MCF 10A (cell line): ENCODE measurements at regions of chr4 and their contacts with region 1.

Region 1: GRCh38 chr4:168514249-168514852 is 17.5 kb downstream of the PALLD start:
- DNase-seq: peak; percentile 69
- H3K4me3 Mint-ChIP-seq: no peak overlapping the region
- H3K27ac Mint-ChIP-seq: no peak overlapping the region
- H3K4me1 Mint-ChIP-seq: peaks cover 10% of the 10 kb centered on the region
- H3K27me3 Mint-ChIP-seq: no peaks in the 10 kb centered on the region
- CTCF ChIP-seq: peak; percentile 33

Region 2: GRCh38 chr4:168318266-168318895 is 196.0 kb before region 1 on chr4 and contains the start of gene DDX60:
- CTCF ChIA-PET with region 1: interaction called, 3 read pairs
- POLR2A ChIA-PET with region 1: interaction called, 3 read pairs
- intact Hi-C with region 1: loop called (anchors 5 kb)
- DNase-seq: peak; percentile 87
- H3K4me3 Mint-ChIP-seq: peak within 1 kb of the TSS; percentile 95
- H3K27ac Mint-ChIP-seq: peak within 1 kb of the TSS; percentile 97
- H3K4me1 Mint-ChIP-seq: peaks cover 24% of the 10 kb centered on the region
- H3K27me3 Mint-ChIP-seq: no peaks in the 10 kb centered on the region
- CTCF ChIP-seq: peak; percentile 30
- total RNA-seq, gene DDX60: 4.7 and 7.9 TPM in 2 replicates

Region 3: GRCh38 chr4:168503652-168504362 is 10.5 kb before region 1 on chr4:
- CTCF ChIA-PET with region 1: interaction called, 37 read pairs
- POLR2A ChIA-PET with region 1: interaction called, 4 read pairs
- intact Hi-C with region 1: no loop called
- DNase-seq: peak; percentile 42
- H3K4me3 Mint-ChIP-seq: no peak overlapping the region
- H3K27ac Mint-ChIP-seq: no peak overlapping the region
- H3K4me1 Mint-ChIP-seq: peaks cover 5% of the 10 kb centered on the region
- H3K27me3 Mint-ChIP-seq: no peaks in the 10 kb centered on the region
- CTCF ChIP-seq: no peak

Region 4: DNA sequence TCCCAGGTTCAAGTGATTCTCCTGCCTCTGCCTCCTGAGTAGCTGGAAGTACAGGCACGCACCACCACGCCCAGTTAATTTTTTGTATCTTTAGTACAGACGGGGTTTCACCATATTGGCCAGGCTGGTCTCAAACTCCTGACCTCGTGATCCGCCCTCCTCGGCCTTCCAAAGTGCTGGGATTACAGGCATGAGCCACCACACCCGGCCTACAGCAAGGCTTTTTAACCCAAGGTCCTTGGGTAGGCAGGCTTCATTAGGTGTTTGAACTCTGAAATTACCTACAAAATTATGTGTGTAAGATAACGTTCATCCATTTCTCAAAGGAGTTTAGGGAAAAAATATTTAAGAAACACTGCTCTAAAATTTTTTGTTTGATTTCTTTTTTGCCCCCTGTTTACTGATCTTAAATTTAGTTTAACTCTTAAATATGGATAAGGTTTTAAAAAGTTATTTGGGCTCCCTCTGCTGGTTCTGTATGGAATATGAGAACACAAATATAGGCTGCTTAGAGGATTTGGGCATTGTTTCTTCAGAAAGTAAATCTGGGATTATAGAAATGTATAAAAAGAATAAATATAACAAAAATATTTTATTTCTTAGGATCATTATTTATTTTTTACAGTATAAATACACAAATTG is 402.9 kb after region 1 on chr4:
- CTCF ChIA-PET with region 1: interaction called, 40 read pairs
- POLR2A ChIA-PET with region 1: no interaction called
- intact Hi-C with region 1: loop called (anchors 1 kb)
- DNase-seq: peak; percentile 64
- H3K4me3 Mint-ChIP-seq: no peak overlapping the region
- H3K27ac Mint-ChIP-seq: no peak overlapping the region
- H3K4me1 Mint-ChIP-seq: peaks cover 5% of the 10 kb centered on the region
- H3K27me3 Mint-ChIP-seq: no peaks in the 10 kb centered on the region
- CTCF ChIP-seq: peak; percentile 52